Esophagus squamous epithelium (tissue), 5 donors: ENCODE measurements at regions of chr2 and their contacts with region 1.

Region 1: GRCh38 chr2:26942543-26943295 is 27.7 kb upstream of the MAPRE3 start:
- DNase-seq: no peak
- H3K4me3 ChIP-seq: no peak overlapping the region
- H3K27ac ChIP-seq: no peak overlapping the region
- H3K4me1 ChIP-seq: peaks cover 0 to 4% (median 0%) of the 10 kb centered on the region in 3 donors
- H3K27me3 ChIP-seq: peaks cover 0 to 63% (median 0%) of the 10 kb centered on the region in 4 donors
- CTCF ChIP-seq: peak; percentile 64 to 79 (median 74)
- POLR2A ChIP-seq: no peak

Region 2: DNA sequence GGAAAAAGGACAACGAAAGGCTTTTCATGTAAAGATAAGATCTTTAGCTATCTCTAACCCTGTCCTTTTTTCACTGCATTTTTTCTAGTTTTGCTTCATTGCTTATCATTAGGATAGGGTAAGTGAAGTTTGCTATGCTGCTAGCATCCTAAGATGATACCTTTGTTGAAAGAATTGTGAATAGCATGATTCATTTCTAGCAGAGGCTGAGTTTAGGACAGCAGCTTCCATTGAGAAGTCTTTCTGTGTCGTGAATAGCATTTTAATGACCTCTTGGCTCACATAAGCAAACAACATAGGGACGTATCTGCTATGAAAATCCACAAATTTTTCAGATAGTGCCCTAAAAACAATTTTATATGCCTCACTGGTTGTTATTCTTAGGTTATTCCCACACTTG is 806.3 kb before region 1 on chr2:
- intact Hi-C with region 1: no loop called
- DNase-seq: no peak
- H3K4me3 ChIP-seq: no peak overlapping the region
- H3K27ac ChIP-seq: no peak overlapping the region
- H3K4me1 ChIP-seq: no peaks in the 10 kb centered on the region
- H3K27me3 ChIP-seq: no peaks in the 10 kb centered on the region
- CTCF ChIP-seq: no peak
- POLR2A ChIP-seq: no peak

Region 3: DNA sequence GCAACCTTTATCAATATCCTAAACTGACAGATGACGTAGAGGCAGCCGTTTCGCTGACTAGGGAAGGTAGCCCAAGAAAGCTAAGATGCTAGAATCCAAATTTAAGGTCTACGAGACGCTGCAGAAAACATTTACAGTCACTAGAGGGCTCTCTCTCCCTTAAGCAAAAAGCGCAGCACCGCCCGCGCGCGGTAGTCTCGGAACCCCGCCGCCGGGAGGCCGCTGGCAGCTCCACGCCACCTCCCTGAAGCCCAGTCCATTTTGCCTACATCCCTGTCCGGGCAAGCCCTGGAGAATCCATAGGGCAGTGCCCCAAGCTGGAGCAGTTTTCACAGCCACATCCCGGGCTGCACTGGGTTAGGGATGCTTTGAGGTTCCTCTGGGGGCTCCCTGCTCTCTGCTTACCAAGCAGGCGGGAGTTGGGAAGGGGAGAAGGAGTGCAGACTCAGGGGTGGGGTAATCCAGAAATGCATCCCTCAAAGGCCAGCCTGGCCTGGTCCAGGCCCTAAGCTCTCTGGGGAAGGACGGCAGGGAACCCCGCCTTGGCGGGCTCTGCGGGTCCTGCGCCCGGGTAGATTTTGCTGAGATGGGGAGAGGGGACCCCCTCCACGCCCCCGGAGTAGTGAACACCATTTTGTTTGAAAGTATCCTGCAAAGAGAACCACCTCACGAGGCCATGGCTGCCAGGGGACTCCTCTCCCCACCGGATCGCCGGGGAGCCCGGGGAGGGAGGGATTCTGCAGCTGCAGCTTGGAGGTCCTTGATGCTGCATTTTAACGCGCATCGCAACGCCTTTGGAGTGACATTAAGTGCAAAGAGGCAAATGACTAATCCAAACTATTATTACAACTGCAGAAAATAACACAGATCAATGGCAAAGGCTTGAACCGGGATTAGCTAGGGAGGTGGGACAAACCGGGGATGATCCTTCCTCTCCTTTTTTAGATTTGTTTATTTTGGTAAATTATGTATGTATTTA is 96.1 kb before region 1 on chr2:
- intact Hi-C with region 1: loop called (anchors 5 kb)
- DNase-seq: no peak
- H3K4me3 ChIP-seq: peak overlapping the region in 1 of 4 donors; percentile 13
- H3K27ac ChIP-seq: no peak overlapping the region
- H3K4me1 ChIP-seq: peaks cover 25 to 43% (median 27%) of the 10 kb centered on the region in 3 donors
- H3K27me3 ChIP-seq: peaks cover 38 to 100% (median 41%) of the 10 kb centered on the region in 4 donors
- CTCF ChIP-seq: peak; percentile 58 to 76 (median 66)
- POLR2A ChIP-seq: no peak